ENCODE measurements at regions of chr3 and their contacts with region 1.

Region 1: DNA sequence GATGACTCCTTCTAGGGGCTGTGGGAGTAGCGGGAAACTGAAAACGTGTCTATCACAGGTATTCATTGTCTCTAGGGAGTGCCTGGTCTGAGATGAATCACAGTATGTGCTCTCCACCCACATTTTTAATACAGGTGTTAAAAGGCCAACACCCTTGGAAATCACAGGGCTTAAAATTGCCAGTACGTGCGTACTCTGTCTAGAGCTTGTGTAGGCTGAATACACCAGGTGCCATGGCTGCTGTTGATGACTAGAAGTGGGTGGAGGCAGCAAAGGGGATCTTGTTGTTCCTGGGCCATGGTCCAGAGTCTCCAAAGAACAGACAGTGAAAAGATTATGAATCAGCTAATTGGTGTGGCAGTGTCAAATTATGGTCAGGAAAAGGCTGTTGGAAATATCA is 35.1 kb upstream of the P3H2 start:
- DNase-seq: no peak
- ATAC-seq: peak; percentile 58
- H3K4me3 ChIP-seq: no peak overlapping the region
- H3K27ac ChIP-seq: no peak overlapping the region
- H3K4me1 ChIP-seq: no peaks in the 10 kb centered on the region
- H3K27me3 ChIP-seq: no peaks in the 10 kb centered on the region
- CTCF ChIP-seq: no peak
- EP300 ChIP-seq: no peak
- POLR2A ChIP-seq: no peak
- RAD21 ChIP-seq: no peak

Region 2: DNA sequence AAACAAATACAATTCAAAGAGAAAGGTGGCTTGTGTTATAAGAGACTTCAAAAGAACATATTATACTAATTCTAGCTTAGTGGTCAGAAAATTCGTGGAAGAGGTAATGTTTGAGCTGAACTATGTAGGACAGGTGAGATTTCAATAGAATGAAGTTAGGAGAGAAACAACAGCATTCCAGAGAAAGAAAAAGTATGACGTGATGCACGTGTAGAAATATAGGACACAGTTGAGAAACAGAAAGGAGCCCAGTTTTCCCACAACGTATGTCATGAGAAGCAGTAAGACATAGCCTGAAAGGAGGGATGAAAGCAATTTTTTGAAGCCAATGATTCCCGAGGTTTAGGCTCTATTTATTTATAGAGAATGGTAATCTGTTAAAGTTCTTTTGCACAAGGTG is 16.4 kb before region 1 on chr3:
- CTCF ChIA-PET with region 1: no interaction called
- POLR2A ChIA-PET with region 1: no interaction called
- RAD21 ChIA-PET with region 1: no interaction called
- SMC1A ChIA-PET with region 1: interaction called, 16 read pairs
- in situ Hi-C with region 1: no loop called
- intact Hi-C with region 1: no loop called
- DNase-seq: no peak
- ATAC-seq: no peak
- H3K4me3 ChIP-seq: no peak overlapping the region
- H3K27ac ChIP-seq: no peak overlapping the region
- H3K4me1 ChIP-seq: no peaks in the 10 kb centered on the region
- H3K27me3 ChIP-seq: no peaks in the 10 kb centered on the region
- CTCF ChIP-seq: no peak
- EP300 ChIP-seq: no peak
- POLR2A ChIP-seq: no peak
- RAD21 ChIP-seq: no peak

Region 3: DNA sequence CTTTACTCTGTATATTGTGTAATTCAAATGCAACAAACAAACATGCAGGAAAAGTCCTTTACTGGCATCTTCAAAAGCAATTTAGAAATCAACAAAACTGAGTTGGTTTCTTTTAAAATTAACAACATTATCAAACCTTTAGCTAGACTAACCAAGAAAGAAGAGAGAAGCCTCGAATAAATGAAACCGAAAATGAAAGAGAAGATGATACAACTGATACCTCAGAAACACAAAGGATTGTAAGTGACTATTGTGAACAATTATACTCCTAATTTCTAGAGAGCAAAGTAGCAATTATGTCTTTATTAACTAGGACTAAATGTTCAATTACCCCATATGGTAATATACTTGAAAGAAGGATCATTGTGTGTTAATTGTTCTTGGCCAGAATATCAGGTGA is 14.1 kb after region 1 on chr3:
- CTCF ChIA-PET with region 1: interaction called, 3 read pairs
- POLR2A ChIA-PET with region 1: no interaction called
- RAD21 ChIA-PET with region 1: no interaction called
- SMC1A ChIA-PET with region 1: interaction called, 23 read pairs
- in situ Hi-C with region 1: no loop called
- intact Hi-C with region 1: no loop called
- DNase-seq: no peak
- ATAC-seq: peak; percentile 82
- H3K4me3 ChIP-seq: no peak overlapping the region
- H3K27ac ChIP-seq: no peak overlapping the region; the same call in 1 of the 2 replicates
- H3K4me1 ChIP-seq: peaks cover 4% of the 10 kb centered on the region; the same call in 1 of the 2 replicates
- H3K27me3 ChIP-seq: no peaks in the 10 kb centered on the region
- CTCF ChIP-seq: no peak
- EP300 ChIP-seq: no peak
- POLR2A ChIP-seq: no peak
- RAD21 ChIP-seq: no peak

Measured in GM12878 (cell line).